Activated CD8-positive, alpha-beta T cell treated with anti-CD3 and anti-CD28 coated beads for 36 hours (primary cell): ENCODE measurements at regions of chr14 and their contacts with region 1.

Region 1: DNA sequence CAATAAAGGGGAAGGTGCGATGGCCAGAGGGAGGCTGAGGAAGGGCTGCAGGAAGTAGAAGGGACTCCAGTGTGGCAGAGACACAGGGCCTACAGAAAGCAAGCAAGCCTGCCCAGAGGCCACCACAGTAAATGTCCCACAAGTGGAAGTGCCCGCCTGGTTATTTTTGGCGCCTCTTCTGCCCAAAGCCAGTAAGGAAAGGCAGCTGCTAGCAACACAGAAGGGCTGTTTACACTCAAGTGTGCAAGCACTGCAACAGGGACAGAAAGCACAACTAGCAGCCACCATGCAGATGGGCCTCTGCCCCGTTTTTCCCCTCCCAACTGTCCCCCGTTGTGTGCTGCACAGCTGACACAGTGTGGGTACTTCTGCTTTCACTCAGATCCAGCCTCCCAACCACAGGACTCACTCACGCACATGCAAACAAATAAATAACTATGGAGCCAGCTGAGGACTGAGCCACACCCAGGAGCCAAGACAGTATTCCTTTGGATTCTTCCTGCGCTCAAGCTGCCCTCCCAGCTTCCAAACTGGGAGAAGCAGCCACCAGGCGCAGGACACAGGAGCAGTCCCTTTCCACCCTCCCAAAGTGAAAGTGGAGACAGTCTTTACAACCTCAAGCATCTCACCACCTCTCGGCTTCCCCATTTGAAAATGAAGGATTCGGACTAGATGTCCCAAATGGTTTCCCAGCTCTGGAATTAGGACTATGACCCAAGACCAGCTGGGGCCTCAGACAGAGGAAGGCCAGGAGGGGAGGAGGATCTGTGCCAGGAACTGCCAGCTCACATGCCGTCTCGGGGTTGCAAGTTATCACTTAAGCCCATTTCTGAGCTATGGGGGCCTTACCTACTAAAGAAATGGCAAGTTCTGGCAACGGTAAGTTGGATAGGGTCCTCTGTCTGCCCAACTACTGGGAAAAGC is 40.0 kb upstream of the PNMA1 start:
- DNase-seq: peak; percentile 80
- ATAC-seq: peak; percentile 37
- H3K4me3 Mint-ChIP-seq: peak overlapping the region; percentile 89
- H3K27ac Mint-ChIP-seq: peak overlapping the region; percentile 97
- H3K4me1 Mint-ChIP-seq: peaks cover 86% of the 10 kb centered on the region
- H3K27me3 Mint-ChIP-seq: no peaks in the 10 kb centered on the region
- CTCF ChIP-seq: no peak

Region 2: GRCh38 chr14:73700325-73700724 is 53.9 kb before region 1 on chr14:
- CTCF ChIA-PET with region 1: no interaction called
- POLR2A ChIA-PET with region 1: no interaction called
- intact Hi-C with region 1: no loop called
- DNase-seq: no peak
- ATAC-seq: no peak
- H3K4me3 Mint-ChIP-seq: no peak overlapping the region
- H3K27ac Mint-ChIP-seq: no peak overlapping the region
- H3K4me1 Mint-ChIP-seq: peaks cover 30% of the 10 kb centered on the region
- H3K27me3 Mint-ChIP-seq: no peaks in the 10 kb centered on the region
- CTCF ChIP-seq: no peak

Region 3: GRCh38 chr14:73713803-73714655 is 40.2 kb before region 1 on chr14 and contains the start of gene PNMA1:
- CTCF ChIA-PET with region 1: interaction called, 3 read pairs
- POLR2A ChIA-PET with region 1: interaction called, 25 read pairs
- intact Hi-C with region 1: no loop called
- DNase-seq: peak; percentile 89
- ATAC-seq: peak; percentile 81
- H3K4me3 Mint-ChIP-seq: peak within 1 kb of the TSS; percentile 93
- H3K27ac Mint-ChIP-seq: peak within 1 kb of the TSS; percentile 98
- H3K4me1 Mint-ChIP-seq: peaks cover 18% of the 10 kb centered on the region
- H3K27me3 Mint-ChIP-seq: no peaks in the 10 kb centered on the region
- CTCF ChIP-seq: no peak
- total RNA-seq, gene PNMA1: 22.9 to 24.1 TPM

Region 4: GRCh38 chr14:73741386-73741875 is 12.8 kb before region 1 on chr14:
- CTCF ChIA-PET with region 1: interaction called, 123 read pairs
- POLR2A ChIA-PET with region 1: interaction called, 236 read pairs
- intact Hi-C with region 1: loop called (anchors 2 kb)
- DNase-seq: peak; percentile 83
- ATAC-seq: peak; percentile 73
- H3K4me3 Mint-ChIP-seq: peak overlapping the region; percentile 74
- H3K27ac Mint-ChIP-seq: peak overlapping the region; percentile 98
- H3K4me1 Mint-ChIP-seq: peaks cover 71% of the 10 kb centered on the region
- H3K27me3 Mint-ChIP-seq: no peaks in the 10 kb centered on the region
- CTCF ChIP-seq: no peak

Region 5: DNA sequence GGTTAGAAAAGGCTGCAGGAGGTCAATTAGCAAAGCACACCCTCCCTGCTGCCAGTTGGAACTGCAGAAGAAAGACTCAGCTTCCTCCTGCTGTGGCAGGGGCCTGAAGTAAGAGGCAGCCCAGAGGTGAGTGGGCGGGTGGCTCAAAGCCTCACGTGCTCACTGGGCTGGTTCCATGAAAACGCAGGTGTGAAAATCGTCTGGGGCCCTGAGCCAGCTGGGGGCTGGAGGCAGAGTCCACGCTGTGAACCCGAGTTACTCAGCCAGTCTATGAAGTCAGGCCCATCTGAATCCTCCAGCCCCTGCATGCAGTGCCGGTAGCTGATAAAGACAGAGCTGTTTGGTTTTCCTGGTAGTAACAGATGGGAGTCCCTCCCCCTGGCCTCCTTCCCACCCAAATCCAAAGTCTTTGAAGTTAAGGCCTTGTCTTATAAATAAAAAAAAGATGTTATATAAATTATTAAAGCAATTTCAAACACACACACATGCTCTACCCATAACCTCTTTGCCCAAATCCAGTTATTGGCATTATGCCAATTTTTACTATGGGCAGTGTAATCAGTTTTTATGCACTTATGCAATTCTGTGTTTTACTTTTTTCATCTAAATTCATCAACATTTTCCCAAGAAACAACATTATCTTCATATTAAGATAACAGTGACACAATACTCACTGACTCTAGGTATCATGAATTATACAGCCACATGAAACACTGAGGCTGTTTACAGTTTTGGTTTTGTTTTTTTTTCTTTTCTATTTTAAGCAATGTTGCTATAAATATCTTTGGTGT is 17.8 kb after region 1 on chr14:
- CTCF ChIA-PET with region 1: interaction called, 19 read pairs
- POLR2A ChIA-PET with region 1: interaction called, 512 read pairs
- intact Hi-C with region 1: no loop called
- DNase-seq: peak; percentile 96
- ATAC-seq: peak; percentile 81
- H3K4me3 Mint-ChIP-seq: peak overlapping the region; percentile 41
- H3K27ac Mint-ChIP-seq: peak overlapping the region; percentile 92
- H3K4me1 Mint-ChIP-seq: peaks cover 73% of the 10 kb centered on the region
- H3K27me3 Mint-ChIP-seq: no peaks in the 10 kb centered on the region
- CTCF ChIP-seq: no peak

Region 6: DNA sequence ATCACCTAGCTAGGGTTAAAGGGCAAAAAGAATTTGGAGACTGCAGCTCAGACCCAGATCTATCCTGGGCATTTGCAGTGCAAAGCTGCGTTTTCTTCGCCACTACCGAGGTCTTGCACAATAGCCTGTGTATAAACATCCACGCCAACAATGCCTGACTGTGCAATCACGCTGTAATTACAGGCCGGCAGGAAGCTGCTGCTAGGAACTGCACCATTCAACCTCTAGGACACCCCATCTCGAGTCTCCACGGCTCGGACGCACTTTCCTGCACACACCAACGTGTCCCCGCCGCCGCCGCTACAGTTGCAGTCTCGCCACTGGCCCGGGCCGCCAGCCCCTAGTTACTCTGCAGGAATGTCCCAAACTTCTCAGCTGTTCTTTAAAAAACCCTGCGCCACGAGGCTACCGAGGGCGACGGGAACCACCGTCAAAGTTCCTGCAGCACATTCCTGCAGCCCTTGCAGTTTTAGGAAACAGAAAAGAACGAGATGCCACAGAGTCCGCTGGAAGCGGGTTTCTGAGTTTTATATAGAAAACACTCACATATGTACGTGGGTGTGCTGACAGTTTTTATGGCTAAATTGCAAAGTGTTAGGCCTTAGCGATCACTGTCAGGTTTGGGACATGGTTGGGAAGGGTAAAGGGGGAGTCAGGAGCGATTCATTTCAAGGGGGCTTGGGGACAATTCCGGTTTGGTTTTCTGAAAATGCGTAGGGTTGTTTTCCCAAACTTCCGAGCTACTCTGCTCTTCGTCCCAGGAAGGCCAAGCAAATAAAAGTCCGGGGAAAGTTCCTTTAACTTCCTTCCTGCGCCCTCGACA is 31.9 kb after region 1 on chr14:
- CTCF ChIA-PET with region 1: interaction called, 84 read pairs
- POLR2A ChIA-PET with region 1: interaction called, 512 read pairs
- intact Hi-C with region 1: loop called (anchors 2 kb)
- DNase-seq: peak; percentile 81
- ATAC-seq: peak; percentile 54
- H3K4me3 Mint-ChIP-seq: peak overlapping the region; percentile 90
- H3K27ac Mint-ChIP-seq: peak overlapping the region; percentile 95
- H3K4me1 Mint-ChIP-seq: peaks cover 58% of the 10 kb centered on the region
- H3K27me3 Mint-ChIP-seq: no peaks in the 10 kb centered on the region
- CTCF ChIP-seq: peak; percentile 37

Region 7: GRCh38 chr14:73825551-73826188 is 71.4 kb after region 1 on chr14:
- CTCF ChIA-PET with region 1: interaction called, 23 read pairs
- POLR2A ChIA-PET with region 1: interaction called, 3 read pairs
- intact Hi-C with region 1: no loop called
- DNase-seq: peak; percentile 88
- ATAC-seq: peak; percentile 85
- H3K4me3 Mint-ChIP-seq: no peak overlapping the region
- H3K27ac Mint-ChIP-seq: no peak overlapping the region
- H3K4me1 Mint-ChIP-seq: peaks cover 19% of the 10 kb centered on the region
- H3K27me3 Mint-ChIP-seq: no peaks in the 10 kb centered on the region
- CTCF ChIP-seq: peak; percentile 89